ENCODE measurements at regions of chr6 and their contacts with region 1.

Region 1: DNA sequence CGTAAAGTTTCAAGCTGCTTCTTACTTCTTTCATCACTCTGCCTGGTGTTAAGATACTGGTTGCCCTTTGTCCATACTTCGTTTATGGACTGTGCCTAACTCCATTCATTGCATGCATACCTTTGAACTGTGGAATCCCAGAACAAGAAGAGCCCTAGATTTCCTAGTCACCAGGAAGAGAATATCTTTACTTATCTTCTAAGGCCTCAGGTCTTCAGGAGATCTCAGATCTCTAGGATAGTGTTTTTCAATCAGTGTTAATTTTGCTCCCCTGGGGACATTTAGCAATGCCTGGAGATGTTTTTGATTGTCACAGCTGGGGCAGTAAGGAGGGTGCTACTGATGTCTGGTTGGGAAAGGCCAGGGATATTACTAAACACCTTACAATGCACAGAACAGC is 35.5 kb upstream of the GJA1 start:
- DNase-seq: no peak
- ATAC-seq: no peak
- H3K4me3 Mint-ChIP-seq: no peak overlapping the region
- H3K27ac Mint-ChIP-seq: no peak overlapping the region
- H3K4me1 Mint-ChIP-seq: peaks cover 8% of the 10 kb centered on the region
- H3K27me3 Mint-ChIP-seq: no peaks in the 10 kb centered on the region
- CTCF ChIP-seq: no peak

Region 2: DNA sequence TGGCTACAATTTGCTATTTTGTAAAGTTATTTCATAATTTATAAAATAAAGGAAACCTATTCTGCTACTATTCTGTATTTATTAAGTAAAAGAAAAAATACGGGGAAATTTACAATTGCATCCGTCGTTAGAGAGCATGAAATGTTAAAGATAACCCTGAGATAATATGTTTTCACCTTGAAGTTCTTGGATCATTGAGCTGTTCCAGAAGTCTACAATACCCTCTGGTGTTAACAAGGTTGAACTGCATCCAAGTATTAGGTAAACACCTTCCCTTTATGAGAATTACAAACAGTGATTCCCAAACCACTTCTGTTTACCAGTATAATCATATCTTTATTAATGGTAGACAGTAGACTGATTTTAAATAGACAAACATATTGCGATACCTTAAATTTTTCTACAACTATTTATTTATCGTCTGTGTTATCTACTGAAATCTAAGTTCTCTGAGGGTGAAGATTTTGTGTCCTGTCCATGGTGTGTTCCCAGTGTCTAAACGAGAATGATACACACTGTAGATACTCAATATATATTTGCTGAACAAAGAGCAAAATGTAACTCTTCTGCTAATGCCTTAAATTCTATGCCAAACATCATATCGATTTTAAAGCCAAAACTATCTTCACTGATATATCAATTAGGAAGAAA is 93.9 kb before region 1 on chr6:
- CTCF ChIA-PET with region 1: interaction called, 12 read pairs
- POLR2A ChIA-PET with region 1: no interaction called
- DNase-seq: no peak
- ATAC-seq: peak; percentile 86
- H3K4me3 Mint-ChIP-seq: no peak overlapping the region
- H3K27ac Mint-ChIP-seq: no peak overlapping the region
- H3K4me1 Mint-ChIP-seq: no peaks in the 10 kb centered on the region
- H3K27me3 Mint-ChIP-seq: no peaks in the 10 kb centered on the region
- CTCF ChIP-seq: peak; percentile 47

Region 3: GRCh38 chr6:121319112-121319553 is 80.8 kb before region 1 on chr6:
- CTCF ChIA-PET with region 1: interaction called, 26 read pairs
- POLR2A ChIA-PET with region 1: no interaction called
- DNase-seq: no peak
- ATAC-seq: peak; percentile 90
- H3K4me3 Mint-ChIP-seq: peak overlapping the region; percentile 27; the same call in 1 of the 2 replicates
- H3K27ac Mint-ChIP-seq: no peak overlapping the region
- H3K4me1 Mint-ChIP-seq: no peaks in the 10 kb centered on the region
- H3K27me3 Mint-ChIP-seq: no peaks in the 10 kb centered on the region
- CTCF ChIP-seq: peak; percentile 36; the same call in 1 of the 2 replicates

Measured in WTC11 (cell line).